ENCODE measurements at regions of chr5 and their contacts with region 1.

Region 1: DNA sequence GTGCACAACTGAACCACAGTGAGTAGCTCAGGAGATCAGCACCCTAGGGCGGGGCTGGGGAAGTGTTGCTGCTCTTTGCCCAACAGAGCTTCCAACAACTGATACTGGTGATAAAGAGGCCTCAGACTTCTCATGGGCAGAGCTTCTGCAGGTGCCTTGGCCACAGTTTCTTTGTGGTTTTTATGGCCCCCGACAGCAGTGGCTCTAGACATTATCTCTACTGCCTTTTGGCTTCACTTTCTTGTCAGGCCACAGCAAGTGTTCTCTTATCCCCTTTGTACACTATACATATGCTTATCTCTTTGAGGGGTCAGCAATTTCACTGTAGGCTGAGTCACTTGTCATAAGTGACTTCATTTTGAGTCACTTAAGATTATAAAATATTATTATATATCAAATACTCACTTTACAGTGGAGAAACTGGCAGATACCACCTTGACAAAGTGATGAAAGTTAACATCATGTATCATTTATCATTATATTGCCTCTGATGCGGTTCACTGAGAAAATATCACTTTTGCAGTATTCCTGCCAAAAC is 90.9 kb upstream of the COX7C start:
- DNase-seq: peak; percentile 44 to 94 (median 64)
- ATAC-seq: peak; percentile 100
- H3K4me3 ChIP-seq: no peak overlapping the region
- H3K27ac ChIP-seq: peak overlapping the region; percentile 48; the same call in 2 of the 3 replicates
- H3K4me1 ChIP-seq: peaks cover 7 to 27% of the 10 kb centered on the region in 2 experiments; a peak in 3 of 5 replicates
- H3K27me3 ChIP-seq: no peaks in the 10 kb centered on the region
- CTCF ChIP-seq: no peak
- EP300 ChIP-seq: peak; percentile 98
- POLR2A ChIP-seq: no peak
- RAD21 ChIP-seq: no peak; a peak in 2 of 4 replicates

Region 2: GRCh38 chr5:86507574-86507973 is 19.3 kb before region 1 on chr5:
- CTCF ChIA-PET with region 1: no interaction called
- POLR2A ChIA-PET with region 1: interaction called, 11 read pairs
- in situ Hi-C with region 1: no loop called
- intact Hi-C with region 1: no loop called
- DNase-seq: peak in 1 of 4 experiments; percentile 14
- ATAC-seq: no peak
- H3K4me3 ChIP-seq: no peak overlapping the region
- H3K27ac ChIP-seq: no peak overlapping the region
- H3K4me1 ChIP-seq: peaks cover 4 to 19% of the 10 kb centered on the region in 2 experiments; a peak in 2 of 5 replicates
- H3K27me3 ChIP-seq: no peaks in the 10 kb centered on the region
- CTCF ChIP-seq: no peak
- EP300 ChIP-seq: no peak
- POLR2A ChIP-seq: no peak
- RAD21 ChIP-seq: no peak

Region 3: GRCh38 chr5:86617756-86618576 is 91.1 kb after region 1 on chr5 and contains the start of gene COX7C:
- CTCF ChIA-PET with region 1: no interaction called
- POLR2A ChIA-PET with region 1: no interaction called
- in situ Hi-C with region 1: no loop called
- intact Hi-C with region 1: loop called (anchors 1 kb)
- DNase-seq: peak; percentile 82 to 98 (median 87)
- ATAC-seq: peak; percentile 92
- H3K4me3 ChIP-seq: peak within 1 kb of the TSS; percentile 81
- H3K27ac ChIP-seq: peak within 1 kb of the TSS; percentile 91
- H3K4me1 ChIP-seq: peaks cover 0 to 6% of the 10 kb centered on the region in 2 experiments; a peak in 1 of 5 replicates
- H3K27me3 ChIP-seq: no peaks in the 10 kb centered on the region
- CTCF ChIP-seq: peak in 1 of 3 experiments; percentile 3; a peak in 1 of 6 replicates
- EP300 ChIP-seq: peak; percentile 52
- POLR2A ChIP-seq: peak; percentile 96
- RAD21 ChIP-seq: no peak
- polyA plus RNA-seq, gene COX7C: 1,621 to 1,783 TPM

Region 4: DNA sequence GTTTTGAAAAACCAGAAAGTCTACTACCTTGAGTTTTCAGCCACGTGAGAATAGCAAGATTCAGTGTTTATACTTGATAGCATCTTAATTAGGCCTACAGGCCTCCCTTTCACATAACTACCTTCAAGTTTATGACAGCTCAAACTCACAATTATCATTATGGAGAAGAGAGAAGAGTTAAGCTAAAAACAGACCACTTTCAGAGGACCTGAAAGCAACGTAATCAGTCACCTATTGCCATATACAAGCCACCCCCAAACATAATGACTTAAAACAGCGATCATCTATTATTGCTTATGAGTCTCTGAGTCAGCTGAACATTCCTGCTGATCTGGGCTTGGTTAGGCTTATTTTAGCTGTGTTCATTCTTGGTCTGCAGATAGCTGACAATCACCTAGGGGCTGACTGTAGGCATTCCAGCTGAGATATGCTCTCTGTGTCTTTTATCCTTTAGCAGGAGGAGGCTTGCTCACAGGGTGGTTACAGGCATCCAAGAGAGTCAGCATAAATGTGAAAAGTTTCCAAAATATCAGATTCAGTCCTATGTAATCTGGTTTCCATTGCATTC is 221.7 kb after region 1 on chr5:
- CTCF ChIA-PET with region 1: no interaction called
- POLR2A ChIA-PET with region 1: no interaction called
- in situ Hi-C with region 1: no loop called
- intact Hi-C with region 1: no loop called
- DNase-seq: no peak
- ATAC-seq: no peak
- H3K4me3 ChIP-seq: no peak overlapping the region
- H3K27ac ChIP-seq: no peak overlapping the region
- H3K4me1 ChIP-seq: no peaks in the 10 kb centered on the region
- H3K27me3 ChIP-seq: no peaks in the 10 kb centered on the region
- CTCF ChIP-seq: no peak
- EP300 ChIP-seq: no peak
- POLR2A ChIP-seq: no peak
- RAD21 ChIP-seq: no peak

Region 5: GRCh38 chr5:86929123-86929766 is 402.4 kb after region 1 on chr5:
- CTCF ChIA-PET with region 1: no interaction called
- POLR2A ChIA-PET with region 1: no interaction called
- in situ Hi-C with region 1: no loop called
- intact Hi-C with region 1: no loop called
- DNase-seq: no peak
- ATAC-seq: no peak
- H3K4me3 ChIP-seq: no peak overlapping the region
- H3K27ac ChIP-seq: no peak overlapping the region
- H3K4me1 ChIP-seq: no peaks in the 10 kb centered on the region
- H3K27me3 ChIP-seq: no peaks in the 10 kb centered on the region
- CTCF ChIP-seq: no peak
- EP300 ChIP-seq: no peak
- POLR2A ChIP-seq: no peak
- RAD21 ChIP-seq: no peak